Heart left ventricle (tissue), 16 donors: ENCODE measurements at regions of chr22 and their contacts with region 1.

Region 1: DNA sequence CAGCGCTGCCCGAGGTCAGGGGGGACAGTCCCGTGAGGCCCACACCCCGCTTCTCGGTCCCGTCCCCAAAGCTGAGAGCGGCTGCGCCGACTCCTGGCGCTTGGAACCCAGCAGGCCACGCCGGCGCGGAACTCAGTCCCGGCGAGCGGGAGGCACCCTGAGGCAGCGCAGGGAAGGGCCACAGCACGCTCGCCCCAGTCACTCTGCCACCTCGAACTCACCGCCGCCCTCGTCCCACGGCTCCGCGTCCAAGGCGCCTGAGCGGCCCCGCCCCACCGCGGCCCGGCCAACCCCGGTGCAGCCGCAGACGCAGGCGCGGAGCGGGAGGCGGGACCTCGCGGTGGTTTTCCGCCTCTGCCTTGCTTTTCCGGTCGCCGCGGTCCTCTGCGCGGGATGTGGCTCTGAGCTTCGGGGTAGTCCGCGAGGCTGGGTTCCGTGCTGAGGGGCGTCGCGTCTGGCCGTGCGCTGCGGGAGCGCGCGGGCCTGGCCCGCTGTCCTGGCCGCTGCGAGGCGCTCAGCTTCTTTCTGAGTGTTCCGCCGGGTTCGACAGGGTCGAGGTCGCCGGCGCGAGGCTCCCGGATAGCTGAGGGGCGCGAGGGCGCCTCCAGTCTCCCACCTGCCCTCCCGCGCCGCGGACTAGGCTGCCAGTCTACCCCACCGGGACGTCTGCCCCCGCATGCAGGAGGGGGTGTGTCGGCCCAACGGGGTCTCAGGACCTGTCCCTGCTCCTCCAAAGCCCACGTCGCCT is at the start of gene CDPF1:
- DNase-seq: peak; percentile 94 to 97 (median 95)
- ATAC-seq: peak; percentile 74 to 94 (median 92)
- H3K4me3 ChIP-seq: peak within 1 kb of the TSS; percentile 53 to 97 (median 81)
- H3K27ac ChIP-seq: peak within 1 kb of the TSS; percentile 69 to 96 (median 94)
- H3K4me1 ChIP-seq: peaks cover 7 to 58% (median 31%) of the 10 kb centered on the region in 12 donors
- H3K27me3 ChIP-seq: no peaks in the 10 kb centered on the region
- CTCF ChIP-seq: peak in 2 of 12 donors; percentile 12 to 31
- POLR2A ChIP-seq: peak; percentile 74 to 96
- total RNA-seq, gene CDPF1: 7.4 to 13.6 (median 9.3) TPM

Region 2: GRCh38 chr22:46139895-46140350 is 110.3 kb before region 1 on chr22:
- intact Hi-C with region 1: loop called in 2 of 10 experiments (anchors 5 to 10 kb)
- DNase-seq: peak in 4 of 5 donors; percentile 54 to 78 (median 72)
- ATAC-seq: peak; percentile 57 to 89 (median 80)
- H3K4me3 ChIP-seq: no peak overlapping the region
- H3K27ac ChIP-seq: peak overlapping the region; percentile 28 to 86 (median 78)
- H3K4me1 ChIP-seq: peaks cover 0 to 24% (median 11%) of the 10 kb centered on the region in 12 donors
- H3K27me3 ChIP-seq: no peaks in the 10 kb centered on the region
- CTCF ChIP-seq: no peak
- POLR2A ChIP-seq: no peak

Region 3: DNA sequence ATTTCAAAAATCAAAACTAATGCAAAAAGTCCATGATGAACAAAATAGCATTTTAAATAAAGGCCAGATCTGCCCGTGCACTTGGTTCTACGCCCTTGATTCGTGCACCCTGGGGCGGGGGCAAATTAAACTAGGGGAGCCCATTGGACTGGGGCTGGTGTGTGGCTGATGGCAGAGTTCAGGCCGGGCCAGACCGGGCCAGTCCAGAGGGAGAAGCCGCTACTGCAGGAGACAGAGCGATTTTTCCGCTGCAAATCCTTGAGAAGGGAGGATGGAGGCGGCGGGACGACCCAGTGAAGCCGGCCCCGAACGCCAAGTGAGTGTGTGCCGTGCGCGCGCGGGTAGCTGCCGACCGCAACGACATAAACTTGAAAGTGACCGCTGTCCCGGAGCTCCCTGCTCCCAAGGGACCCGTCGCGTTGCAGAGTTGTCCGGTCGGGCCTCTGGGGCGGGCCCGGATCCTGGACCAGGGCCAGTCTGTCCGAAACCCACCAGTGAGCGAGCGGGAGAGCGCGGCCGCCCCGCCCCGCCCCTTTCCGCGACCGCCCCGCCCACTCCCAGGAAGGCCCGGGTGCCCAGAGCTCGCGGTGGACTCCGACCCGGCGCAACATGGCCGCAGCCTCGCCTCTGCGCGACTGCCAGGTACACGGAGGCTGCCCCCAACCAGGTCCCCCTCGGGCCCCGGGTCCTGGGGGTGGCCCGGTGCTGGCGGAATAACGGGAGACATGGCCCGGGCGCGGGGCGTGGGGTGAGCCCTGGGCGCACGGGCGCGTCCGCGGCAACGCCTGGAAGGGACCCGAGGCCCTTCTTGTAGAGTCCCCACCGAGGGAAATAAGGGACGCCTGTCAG is 17.4 kb after region 1 on chr22 and contains the start of gene TTC38:
- intact Hi-C with region 1: loop called in 1 of 10 experiments (anchors 2 kb)
- DNase-seq: peak; percentile 96 to 98 (median 96)
- ATAC-seq: peak; percentile 93 to 98 (median 98)
- H3K4me3 ChIP-seq: peak within 1 kb of the TSS; percentile 57 to 93 (median 78)
- H3K27ac ChIP-seq: peak within 1 kb of the TSS; percentile 60 to 96 (median 90)
- H3K4me1 ChIP-seq: peaks cover 0 to 38% (median 23%) of the 10 kb centered on the region in 12 donors
- H3K27me3 ChIP-seq: peaks cover 0 to 2% (median 0%) of the 10 kb centered on the region in 9 donors
- CTCF ChIP-seq: no peak
- POLR2A ChIP-seq: peak in 1 of 2 donors; percentile 72
- total RNA-seq, gene TTC38: 21.3 to 72.4 (median 25.3) TPM

Region 4: DNA sequence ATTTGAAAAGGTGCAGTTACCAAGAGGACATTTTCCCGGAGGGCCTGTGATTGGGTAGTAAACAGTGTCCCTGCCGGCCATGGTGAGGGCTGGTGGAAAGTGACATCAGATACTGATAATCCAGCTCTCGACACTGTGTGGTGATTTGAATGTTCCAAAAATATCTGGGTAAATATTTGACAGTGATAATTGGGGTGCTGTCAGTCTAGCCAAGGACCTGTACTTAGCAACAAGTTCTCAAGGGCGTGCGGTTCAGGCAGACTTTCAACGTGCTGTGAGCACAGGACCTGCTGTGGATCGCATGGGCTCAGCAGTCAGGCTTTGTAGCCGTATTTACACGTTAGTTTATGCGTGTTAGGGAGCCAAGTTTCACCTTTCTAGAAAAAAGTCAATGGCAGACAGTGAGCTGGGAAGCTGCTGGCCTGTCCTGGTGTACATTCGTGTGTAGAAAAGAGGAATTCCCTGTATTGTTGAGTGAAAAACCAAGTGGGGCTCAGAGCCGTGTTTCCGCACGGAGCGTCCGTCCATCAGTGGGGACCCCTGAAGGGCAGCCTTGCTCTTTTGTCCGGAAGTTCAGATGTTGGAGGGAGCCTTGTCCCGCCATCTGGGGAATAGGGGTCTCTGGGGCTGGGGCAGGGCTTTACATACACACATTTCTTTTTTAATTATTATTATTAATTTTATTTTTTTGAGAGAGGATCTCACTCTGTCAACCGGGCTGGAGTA is 96.6 kb after region 1 on chr22:
- intact Hi-C with region 1: no loop called
- DNase-seq: peak; percentile 62 to 89 (median 67)
- ATAC-seq: peak; percentile 75 to 89 (median 81)
- H3K4me3 ChIP-seq: no peak overlapping the region
- H3K27ac ChIP-seq: peak overlapping the region; percentile 73 to 94 (median 88)
- H3K4me1 ChIP-seq: peaks cover 0 to 55% (median 25%) of the 10 kb centered on the region in 12 donors
- H3K27me3 ChIP-seq: no peaks in the 10 kb centered on the region
- CTCF ChIP-seq: peak in 1 of 12 donors; percentile 7
- POLR2A ChIP-seq: no peak